ENCODE measurements at regions of chr16 and their contacts with region 1.

Region 1: GRCh38 chr16:740764-741505 is at the start of gene CIAO3:
- DNase-seq: peak; percentile 94
- ATAC-seq: peak; percentile 88
- H3K4me3 Mint-ChIP-seq: peak within 1 kb of the TSS; percentile 74
- H3K27ac Mint-ChIP-seq: peak within 1 kb of the TSS; percentile 57
- H3K4me1 Mint-ChIP-seq: peaks cover 29% of the 10 kb centered on the region
- H3K27me3 Mint-ChIP-seq: no peaks in the 10 kb centered on the region
- total RNA-seq, gene CIAO3: 34.8 to 37.0 TPM

Region 2: GRCh38 chr16:720990-721764 is 19.8 kb before region 1 on chr16 and contains the start of gene ANTKMT:
- CTCF ChIA-PET with region 1: interaction called, 22 read pairs
- DNase-seq: peak; percentile 83
- ATAC-seq: peak; percentile 72
- H3K4me3 Mint-ChIP-seq: peak within 1 kb of the TSS; percentile 69
- H3K27ac Mint-ChIP-seq: peak within 1 kb of the TSS; percentile 72
- H3K4me1 Mint-ChIP-seq: peaks cover 23% of the 10 kb centered on the region
- H3K27me3 Mint-ChIP-seq: peaks cover 4% of the 10 kb centered on the region
- total RNA-seq, gene ANTKMT: 14.8 to 21.1 TPM

Region 3: DNA sequence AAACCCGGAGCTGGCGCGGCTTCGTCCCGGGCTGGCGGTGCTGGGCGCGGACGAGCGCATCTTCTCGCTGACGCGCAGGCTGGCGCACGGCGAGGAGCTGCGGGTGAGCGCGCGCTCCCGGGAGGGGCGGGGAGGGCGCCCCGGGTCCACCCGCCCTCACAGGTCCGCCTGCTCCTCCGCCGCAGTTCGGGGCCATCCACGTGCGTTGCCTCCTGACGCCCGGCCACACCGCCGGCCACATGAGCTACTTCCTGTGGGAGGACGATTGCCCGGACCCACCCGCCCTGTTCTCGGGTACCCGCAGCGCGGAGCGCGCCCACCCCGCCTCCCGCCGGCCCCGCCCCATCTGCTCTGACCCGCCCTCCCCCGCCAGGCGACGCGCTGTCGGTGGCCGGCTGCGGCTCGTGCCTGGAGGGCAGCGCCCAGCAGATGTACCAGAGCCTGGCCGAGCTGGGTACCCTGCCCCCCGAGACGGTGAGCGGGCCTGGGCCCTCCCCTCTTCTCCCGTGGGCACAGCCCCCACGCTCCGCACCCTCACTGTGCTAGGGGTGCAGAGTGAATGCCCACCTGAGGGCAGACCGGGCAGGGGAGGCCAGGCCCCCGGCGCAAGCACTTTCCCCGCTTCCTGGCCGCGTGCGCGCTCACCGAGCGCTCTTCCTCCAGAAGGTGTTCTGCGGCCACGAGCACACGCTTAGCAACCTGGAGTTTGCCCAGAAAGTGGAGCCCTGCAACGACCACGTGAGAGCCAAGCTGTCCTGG is 12.6 kb before region 1 on chr16:
- CTCF ChIA-PET with region 1: interaction called, 22 read pairs
- DNase-seq: peak; percentile 79
- ATAC-seq: peak; percentile 71
- H3K4me3 Mint-ChIP-seq: no peak overlapping the region
- H3K27ac Mint-ChIP-seq: no peak overlapping the region
- H3K4me1 Mint-ChIP-seq: peaks cover 4% of the 10 kb centered on the region
- H3K27me3 Mint-ChIP-seq: no peaks in the 10 kb centered on the region

Region 4: GRCh38 chr16:788394-789126 is 47.6 kb after region 1 on chr16 and contains the start of gene CHTF18:
- CTCF ChIA-PET with region 1: interaction called, 18 read pairs
- DNase-seq: peak; percentile 94
- ATAC-seq: peak; percentile 95
- H3K4me3 Mint-ChIP-seq: peak within 1 kb of the TSS; percentile 84
- H3K27ac Mint-ChIP-seq: peak within 1 kb of the TSS; percentile 78
- H3K4me1 Mint-ChIP-seq: peaks cover 19% of the 10 kb centered on the region
- H3K27me3 Mint-ChIP-seq: no peaks in the 10 kb centered on the region
- total RNA-seq, gene CHTF18: 125 to 139 TPM

Region 5: DNA sequence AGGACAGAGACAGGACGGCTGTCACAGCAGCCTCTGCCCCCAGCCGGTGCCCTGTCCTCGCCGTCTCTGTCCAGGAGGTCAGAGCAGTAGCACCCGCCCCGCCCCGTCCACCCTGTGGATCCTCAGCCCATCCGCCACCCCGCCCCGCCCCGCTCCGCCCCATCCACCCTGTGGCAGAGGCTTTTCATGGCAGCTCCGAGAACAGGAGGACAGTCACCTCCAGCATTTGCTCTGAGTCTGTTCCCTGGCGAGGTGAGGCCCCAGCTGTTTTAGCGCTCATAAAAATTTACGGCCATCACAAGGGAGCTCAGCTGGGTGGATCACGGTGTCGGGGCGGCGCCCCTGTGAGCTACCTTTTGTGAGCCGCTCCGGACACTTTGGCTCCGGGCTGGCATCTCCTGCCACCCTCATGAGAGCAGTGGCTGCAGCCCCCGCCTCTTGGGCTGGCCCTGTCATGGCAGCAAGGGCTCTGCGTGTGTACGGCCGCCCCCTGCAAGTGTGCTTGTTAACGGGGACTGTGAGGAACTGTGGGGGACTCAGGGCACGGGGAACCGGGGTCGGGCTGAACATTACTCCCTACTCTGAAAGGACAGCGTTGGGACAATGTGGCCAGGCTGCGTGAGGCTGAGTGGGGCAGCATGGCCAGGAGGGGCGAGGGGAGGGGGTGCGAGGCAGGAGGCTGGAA is 91.9 kb after region 1 on chr16:
- CTCF ChIA-PET with region 1: no interaction called
- DNase-seq: no peak
- ATAC-seq: no peak
- H3K4me3 Mint-ChIP-seq: no peak overlapping the region
- H3K27ac Mint-ChIP-seq: no peak overlapping the region
- H3K4me1 Mint-ChIP-seq: peaks cover 2% of the 10 kb centered on the region
- H3K27me3 Mint-ChIP-seq: no peaks in the 10 kb centered on the region